Panc1 (cell line): ENCODE measurements at regions of chr1 and their contacts with region 1.

Region 1: DNA sequence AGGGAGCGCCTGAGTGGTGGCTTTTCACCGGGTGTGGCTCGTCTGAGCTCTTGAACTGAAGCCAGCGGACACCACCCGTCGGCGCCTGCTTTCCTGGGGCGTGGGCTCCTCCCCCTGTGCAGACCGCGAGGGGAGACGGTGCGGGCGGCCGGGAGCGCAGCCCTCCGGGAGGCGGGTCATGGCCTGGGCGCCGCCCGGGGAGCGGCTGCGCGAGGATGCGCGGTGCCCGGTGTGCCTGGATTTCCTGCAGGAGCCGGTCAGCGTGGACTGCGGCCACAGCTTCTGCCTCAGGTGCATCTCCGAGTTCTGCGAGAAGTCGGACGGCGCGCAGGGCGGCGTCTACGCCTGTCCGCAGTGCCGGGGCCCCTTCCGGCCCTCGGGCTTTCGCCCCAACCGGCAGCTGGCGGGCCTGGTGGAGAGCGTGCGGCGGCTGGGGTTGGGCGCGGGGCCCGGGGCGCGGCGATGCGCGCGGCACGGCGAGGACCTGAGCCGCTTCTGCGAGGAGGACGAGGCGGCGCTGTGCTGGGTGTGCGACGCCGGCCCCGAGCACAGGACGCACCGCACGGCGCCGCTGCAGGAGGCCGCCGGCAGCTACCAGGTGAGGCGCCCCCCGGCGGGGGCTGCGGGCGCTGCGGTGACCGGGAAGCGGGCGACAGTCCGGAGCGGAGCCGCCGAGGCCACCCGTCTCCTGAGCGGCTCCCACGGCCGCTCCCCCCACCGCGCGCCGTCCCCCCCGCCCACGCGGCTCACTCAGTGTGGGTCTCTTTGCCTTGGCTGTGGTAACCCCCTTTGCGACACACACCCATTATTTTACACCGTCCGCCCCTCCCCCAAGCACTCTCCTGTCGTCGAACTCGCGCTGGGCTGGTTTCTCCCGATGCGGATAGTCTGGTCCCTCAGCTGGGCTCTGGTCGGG is at the start of gene TRIM58:
- DNase-seq: no peak
- ATAC-seq: no peak
- H3K4me3 ChIP-seq: no peak within 1 kb of the TSS; a peak in 1 of 4 replicates
- H3K27ac ChIP-seq: no peak within 1 kb of the TSS
- H3K4me1 ChIP-seq: no peaks in the 10 kb centered on the region
- H3K27me3 ChIP-seq: no peaks in the 10 kb centered on the region
- CTCF ChIP-seq: no peak
- total RNA-seq, gene TRIM58: not detected

Region 2: DNA sequence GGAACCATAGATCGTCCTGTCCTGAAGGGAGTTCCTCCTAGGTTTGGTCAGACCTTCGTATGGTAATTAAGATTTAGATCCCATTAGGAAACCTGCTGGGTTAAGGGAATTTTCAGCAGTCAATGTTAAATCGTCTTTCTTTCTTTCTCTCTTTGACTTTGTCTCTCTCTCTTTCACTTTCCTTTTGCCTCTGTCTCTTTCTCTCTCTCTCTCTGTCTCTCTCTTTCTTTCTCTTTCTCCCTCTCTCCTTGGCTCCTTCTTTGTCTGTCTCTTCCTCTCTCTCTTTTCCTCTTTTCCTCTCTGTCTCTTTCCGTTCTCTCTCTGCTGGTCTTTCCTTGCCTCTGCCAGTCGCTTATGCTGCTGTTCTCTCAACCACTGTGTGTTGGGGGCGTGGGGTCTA is 46.8 kb after region 1 on chr1:
- CTCF ChIA-PET with region 1: no interaction called
- POLR2A ChIA-PET with region 1: no interaction called
- in situ Hi-C with region 1: no loop called
- intact Hi-C with region 1: no loop called
- DNase-seq: no peak
- ATAC-seq: no peak
- H3K4me3 ChIP-seq: no peak overlapping the region
- H3K27ac ChIP-seq: no peak overlapping the region
- H3K4me1 ChIP-seq: no peaks in the 10 kb centered on the region
- H3K27me3 ChIP-seq: no peaks in the 10 kb centered on the region
- CTCF ChIP-seq: no peak

Region 3: DNA sequence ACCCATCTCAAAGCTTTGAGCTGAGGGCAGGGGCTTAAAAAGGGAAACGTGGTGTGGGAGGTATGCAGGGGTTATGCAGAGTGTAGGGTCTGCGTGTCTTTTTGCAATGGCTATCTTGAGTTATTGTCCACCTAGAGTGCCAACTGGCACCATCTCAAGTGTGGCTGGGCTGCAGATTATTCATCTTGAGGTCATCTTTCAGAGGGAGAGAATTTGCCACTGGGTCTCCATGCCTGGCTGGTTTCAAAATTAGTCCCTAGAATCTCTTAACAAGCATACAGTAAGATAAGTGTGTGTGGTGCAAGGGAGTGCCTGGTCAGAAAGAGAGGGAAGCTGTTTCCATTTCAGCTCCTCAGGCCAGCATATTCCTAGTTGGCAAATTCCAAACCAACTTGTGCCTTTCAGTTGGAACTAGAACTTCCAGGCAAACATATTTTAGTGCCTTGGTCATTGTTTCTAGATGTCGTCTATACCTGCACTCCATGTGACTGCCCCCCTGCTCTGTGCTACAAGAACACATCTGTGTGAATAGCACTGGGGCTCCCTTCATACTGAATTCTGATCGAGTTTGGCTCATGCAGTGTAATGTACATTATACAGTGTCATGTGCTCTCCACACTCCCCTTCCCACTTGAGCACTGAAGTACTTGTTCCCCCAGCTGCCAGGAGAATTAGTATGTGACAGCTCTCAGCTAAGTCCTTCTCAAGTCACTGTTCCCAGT is 57.8 kb after region 1 on chr1:
- CTCF ChIA-PET with region 1: no interaction called
- POLR2A ChIA-PET with region 1: no interaction called
- in situ Hi-C with region 1: no loop called
- intact Hi-C with region 1: loop called (anchors 10 kb)
- DNase-seq: no peak
- ATAC-seq: no peak; the same call in 1 of the 2 replicates
- H3K4me3 ChIP-seq: no peak overlapping the region
- H3K27ac ChIP-seq: no peak overlapping the region
- H3K4me1 ChIP-seq: no peaks in the 10 kb centered on the region
- H3K27me3 ChIP-seq: no peaks in the 10 kb centered on the region
- CTCF ChIP-seq: no peak